Left ventricle myocardium superior (tissue), 1 donor: ENCODE measurements at regions of chr7 and their contacts with region 1.

Region 1: DNA sequence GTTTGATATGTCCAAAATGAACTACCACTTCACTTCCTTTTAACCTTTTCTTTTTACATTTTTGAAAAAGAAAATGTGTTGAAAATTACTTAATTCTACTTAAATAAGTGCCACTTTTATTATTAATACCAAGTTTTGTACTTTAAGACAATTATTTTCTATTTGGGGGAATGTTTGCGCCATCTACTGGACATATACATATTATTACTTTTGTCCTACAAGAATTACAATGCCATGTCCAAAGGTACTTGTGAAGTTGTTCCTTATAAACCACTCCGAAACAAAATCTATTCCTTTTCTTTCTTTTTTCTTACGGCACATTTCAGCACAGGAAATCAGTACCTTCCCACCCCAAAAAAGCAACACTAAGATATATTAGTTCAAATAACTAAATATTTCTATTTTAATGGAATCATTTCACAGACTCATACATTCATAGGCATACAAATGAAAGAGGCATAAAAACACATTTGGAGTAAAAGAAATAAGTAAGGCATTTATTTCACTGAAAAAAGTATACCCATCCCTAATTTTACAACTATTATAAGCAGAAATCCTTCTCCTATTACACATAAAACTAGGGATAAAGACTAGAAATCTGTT is 169.9 kb downstream of the RNF133 start:
- DNase-seq: no peak
- ATAC-seq: no peak

Region 2: GRCh38 chr7:122092964-122093797 is 435.8 kb before region 1 on chr7:
- intact Hi-C with region 1: loop called (anchors 10 kb)
- DNase-seq: peak; percentile 52
- ATAC-seq: no peak

Region 3: DNA sequence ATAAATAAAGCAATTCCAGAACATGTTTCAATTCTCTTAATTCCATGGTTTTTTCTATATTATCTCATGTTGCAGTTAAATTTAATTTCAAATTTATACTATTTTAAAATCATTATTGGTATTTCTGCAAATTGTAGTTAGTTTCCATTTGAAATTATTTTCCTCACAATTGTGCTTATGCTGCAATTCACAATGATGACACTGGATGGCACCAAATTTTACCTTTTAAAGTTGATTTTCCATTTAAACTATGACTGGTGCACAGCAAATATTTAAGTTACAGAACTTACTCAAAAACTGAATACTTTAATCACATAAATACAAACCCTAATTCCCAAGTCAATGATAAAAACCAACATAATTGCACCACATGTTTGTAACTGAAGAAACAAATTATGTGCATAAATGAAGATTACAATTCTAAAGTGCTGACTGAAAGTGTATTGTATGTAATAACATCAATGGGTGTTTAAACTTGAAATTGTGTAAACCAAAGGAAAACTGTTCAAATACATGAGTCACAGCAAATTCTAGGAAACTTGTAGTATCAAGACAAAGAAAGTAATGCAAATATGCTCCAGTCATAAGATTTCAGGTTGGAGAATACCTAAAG is 309.6 kb before region 1 on chr7:
- intact Hi-C with region 1: loop called (anchors 5 kb)
- DNase-seq: no peak
- ATAC-seq: no peak

Region 4: GRCh38 chr7:122468945-122469344 is 60.0 kb before region 1 on chr7:
- intact Hi-C with region 1: no loop called
- DNase-seq: no peak
- ATAC-seq: no peak

Region 5: GRCh38 chr7:123748734-123749536 is 1220.0 kb after region 1 on chr7 and contains the start of gene WASL:
- intact Hi-C with region 1: no loop called
- DNase-seq: peak; percentile 96
- ATAC-seq: peak; percentile 94
- total RNA-seq, gene WASL: 31.6 TPM